ENCODE measurements at regions of chr4 and their contacts with region 1.

Region 1: DNA sequence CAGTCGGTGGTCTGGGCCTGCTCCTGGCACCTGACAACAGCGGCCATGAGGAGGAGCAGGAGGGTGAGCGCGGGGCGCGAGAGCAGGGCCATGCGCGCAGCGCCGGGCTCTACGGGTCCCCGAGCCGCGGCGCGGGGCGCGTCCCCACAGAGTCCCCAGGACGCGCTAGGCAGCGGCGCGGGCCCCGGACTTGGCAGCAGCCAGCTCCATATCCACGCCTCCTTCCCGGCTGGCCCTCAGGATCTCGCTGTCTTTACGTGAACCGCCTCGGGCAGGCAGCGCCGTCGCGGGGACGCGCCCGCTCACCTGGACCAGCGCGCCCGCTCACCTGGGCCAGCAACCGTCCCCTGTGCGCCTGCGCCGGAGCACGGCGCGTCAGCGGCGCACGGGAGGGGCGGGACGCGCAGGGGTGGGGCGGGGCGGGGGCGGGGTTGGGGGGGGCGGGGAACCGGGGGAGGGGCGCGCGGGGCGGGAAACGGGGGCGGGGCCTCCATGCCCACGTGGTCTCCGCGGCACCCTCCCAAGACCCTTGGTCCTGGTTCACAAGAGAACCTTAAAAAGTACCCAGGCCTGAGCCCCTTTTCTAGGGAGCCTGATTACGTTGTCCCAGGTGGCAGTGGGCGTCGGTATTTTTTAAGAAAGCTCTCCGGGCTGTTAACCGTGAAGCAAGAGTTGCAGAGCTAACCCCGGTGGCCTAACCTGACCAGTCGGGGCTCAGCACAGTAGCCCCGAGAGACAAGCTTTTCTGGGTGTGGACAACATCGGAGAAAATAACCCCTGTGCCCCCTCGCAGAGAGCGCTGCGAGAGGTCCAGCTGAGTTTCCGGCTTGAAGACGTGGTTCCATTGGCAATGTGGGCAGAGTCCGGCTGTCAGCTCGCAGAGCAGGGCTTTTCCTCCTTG is at the start of gene PLA2G12A:
- DNase-seq: peak; percentile 75 to 91 (median 86)
- ATAC-seq: peak; percentile 96
- H3K4me3 ChIP-seq: peak within 1 kb of the TSS; percentile 96
- H3K4me3 Mint-ChIP-seq: peak within 1 kb of the TSS; percentile 88 to 96 (median 92)
- H3K27ac ChIP-seq: peak within 1 kb of the TSS; percentile 78
- H3K27ac Mint-ChIP-seq: peak within 1 kb of the TSS; percentile 64 to 95 (median 90)
- H3K4me1 ChIP-seq: peaks cover 10 to 14% of the 10 kb centered on the region in 2 donors
- H3K4me1 Mint-ChIP-seq: peaks cover 12 to 39% (median 30%) of the 10 kb centered on the region in 7 donors
- H3K27me3 ChIP-seq: no peaks in the 10 kb centered on the region
- H3K27me3 Mint-ChIP-seq: peaks cover 0 to 4% (median 0%) of the 10 kb centered on the region in 5 donors
- total RNA-seq, gene PLA2G12A: 11.5 to 15.4 (median 14.5) TPM

Region 2: DNA sequence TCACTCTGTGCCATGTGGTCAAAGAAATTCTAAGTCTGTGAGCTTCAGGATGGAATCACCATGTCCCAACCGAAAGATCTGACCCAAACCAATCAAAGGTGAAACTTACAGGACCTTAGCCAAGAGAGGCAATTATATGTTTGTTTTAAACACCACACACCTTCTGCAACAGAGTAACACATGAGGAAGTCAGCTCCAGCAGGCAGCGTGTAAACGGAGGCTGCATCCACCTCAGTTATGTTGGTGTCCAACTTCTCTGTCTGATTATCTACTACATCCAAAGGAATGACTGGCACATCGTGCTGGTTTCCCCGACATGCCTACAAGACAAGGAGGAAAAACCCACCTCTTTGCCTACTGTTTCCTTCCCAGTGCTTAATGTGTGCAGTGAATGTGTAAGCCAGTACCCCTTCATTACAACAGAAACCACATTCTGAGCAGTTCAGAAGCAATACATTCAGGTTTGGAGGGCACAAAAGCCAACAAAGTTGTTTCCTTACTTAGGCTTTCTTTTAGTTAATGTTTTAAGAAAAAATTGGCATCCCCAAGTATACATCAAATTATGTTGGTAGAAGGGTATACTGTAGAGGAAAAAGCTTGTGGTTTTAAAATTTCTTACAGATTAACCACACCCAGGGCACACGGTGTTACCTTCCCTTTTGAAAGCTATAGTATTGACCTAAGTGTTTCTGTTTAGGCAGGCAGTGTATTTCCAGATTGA is 39.1 kb before region 1 on chr4:
- CTCF ChIA-PET with region 1: no interaction called
- POLR2A ChIA-PET with region 1: no interaction called
- intact Hi-C with region 1: loop called in 1 of 2 experiments (anchors 5 kb)
- DNase-seq: peak in 7 of 9 donors; percentile 16 to 55 (median 31)
- ATAC-seq: peak; percentile 85
- H3K4me3 ChIP-seq: no peak overlapping the region
- H3K4me3 Mint-ChIP-seq: peak overlapping the region; percentile 40 to 79 (median 64)
- H3K27ac ChIP-seq: peak overlapping the region; percentile 42
- H3K27ac Mint-ChIP-seq: peak overlapping the region; percentile 59 to 90 (median 87)
- H3K4me1 ChIP-seq: peaks cover 17 to 23% of the 10 kb centered on the region in 2 donors
- H3K4me1 Mint-ChIP-seq: peaks cover 17 to 62% (median 40%) of the 10 kb centered on the region in 7 donors
- H3K27me3 ChIP-seq: no peaks in the 10 kb centered on the region
- H3K27me3 Mint-ChIP-seq: no peaks in the 10 kb centered on the region

Region 3: DNA sequence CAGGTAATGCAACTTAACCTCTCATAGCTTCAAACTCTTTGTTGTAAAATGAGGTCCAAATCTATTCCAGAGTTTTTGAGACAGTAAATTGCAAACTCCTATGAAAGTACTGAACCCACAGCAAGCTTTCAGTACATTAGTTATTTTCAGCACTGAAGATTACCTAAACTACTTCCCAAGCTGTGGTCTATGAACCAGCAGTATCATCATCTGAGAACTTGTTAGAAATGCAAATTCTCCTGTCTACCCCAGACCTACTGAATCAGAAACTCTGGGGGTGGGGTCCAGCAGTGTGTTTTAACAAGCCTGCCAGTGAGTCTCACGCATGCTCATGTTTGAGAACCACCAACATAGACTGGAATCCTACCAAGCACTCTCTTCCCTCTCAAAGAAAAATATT is 21.0 kb before region 1 on chr4:
- CTCF ChIA-PET with region 1: interaction called, 3 read pairs
- POLR2A ChIA-PET with region 1: interaction called, 4 read pairs
- intact Hi-C with region 1: loop called in 1 of 2 experiments (anchors 2 kb)
- DNase-seq: no peak
- ATAC-seq: no peak
- H3K4me3 ChIP-seq: no peak overlapping the region
- H3K4me3 Mint-ChIP-seq: no peak overlapping the region
- H3K27ac ChIP-seq: no peak overlapping the region
- H3K27ac Mint-ChIP-seq: peak overlapping the region in 2 of 9 donors; percentile 39 to 49
- H3K4me1 ChIP-seq: no peaks in the 10 kb centered on the region
- H3K4me1 Mint-ChIP-seq: peaks cover 2 to 4% (median 4%) of the 10 kb centered on the region in 7 donors
- H3K27me3 ChIP-seq: no peaks in the 10 kb centered on the region
- H3K27me3 Mint-ChIP-seq: no peaks in the 10 kb centered on the region

Measured in naive thymus-derived CD4-positive, alpha-beta T cell (primary cell).